ENCODE measurements at regions of chr21 and their contacts with region 1.

Region 1: GRCh38 chr21:17789656-17790055 is 29.5 kb downstream of the C21orf91 start:
- DNase-seq: no peak
- H3K4me3 ChIP-seq: no peak overlapping the region
- H3K27ac ChIP-seq: no peak overlapping the region
- H3K4me1 ChIP-seq: no peaks in the 10 kb centered on the region
- H3K27me3 ChIP-seq: no peaks in the 10 kb centered on the region
- CTCF ChIP-seq: no peak
- POLR2A ChIP-seq: no peak

Region 2: GRCh38 chr21:17813353-17813752 is 23.7 kb after region 1 on chr21:
- CTCF ChIA-PET with region 1: no interaction called
- POLR2A ChIA-PET with region 1: no interaction called
- dilution Hi-C with region 1: no loop called
- intact Hi-C with region 1: loop called (anchors 2 kb)
- DNase-seq: no peak
- H3K4me3 ChIP-seq: no peak overlapping the region
- H3K27ac ChIP-seq: no peak overlapping the region
- H3K4me1 ChIP-seq: peaks cover 8% of the 10 kb centered on the region
- H3K27me3 ChIP-seq: no peaks in the 10 kb centered on the region
- CTCF ChIP-seq: no peak
- POLR2A ChIP-seq: no peak

Measured in endothelial cell of umbilical vein (primary cell).